Caco-2 (cell line): ENCODE measurements at regions of chr2 and their contacts with region 1.

Region 1: DNA sequence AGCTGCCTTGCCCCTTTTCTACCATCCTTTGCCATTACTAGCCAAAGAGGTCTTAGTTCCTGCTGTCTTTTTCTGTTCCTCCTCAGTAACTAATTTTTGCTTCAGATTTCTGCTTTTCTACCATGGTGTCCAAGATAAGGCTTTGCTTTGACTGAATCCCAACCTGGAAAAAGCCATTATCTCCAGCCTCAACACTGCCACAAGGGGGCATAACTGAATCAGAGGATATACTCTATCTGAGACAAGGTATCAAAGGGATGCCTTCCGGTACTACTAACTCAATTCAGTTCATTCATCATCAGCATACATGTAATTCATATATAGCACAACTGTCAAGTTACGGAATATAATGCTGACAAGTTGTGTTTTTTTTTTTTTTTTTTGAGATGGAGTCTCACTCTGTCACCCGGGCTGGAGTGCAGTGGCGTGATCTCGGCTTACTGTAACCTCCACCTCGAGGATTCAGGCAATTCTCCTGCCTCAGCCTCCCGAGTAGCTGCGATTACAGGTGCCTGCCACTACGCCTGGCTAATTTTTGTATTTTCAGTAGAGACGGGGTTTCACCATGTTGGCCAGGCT is 11.4 kb downstream of the OSGEPL1 start:
- DNase-seq: peak; percentile 53 to 61
- H3K4me3 ChIP-seq: no peak overlapping the region
- H3K4me3 Mint-ChIP-seq: no peak overlapping the region
- H3K27ac Mint-ChIP-seq: no peak overlapping the region
- H3K4me1 ChIP-seq: no peaks in the 10 kb centered on the region
- H3K4me1 Mint-ChIP-seq: no peaks in the 10 kb centered on the region
- H3K27me3 ChIP-seq: no peaks in the 10 kb centered on the region
- H3K27me3 Mint-ChIP-seq: no peaks in the 10 kb centered on the region
- CTCF ChIP-seq: peak; percentile 57 to 69

Region 2: GRCh38 chr2:189109921-189110397 is 641.2 kb before region 1 on chr2:
- CTCF ChIA-PET with region 1: no interaction called
- POLR2A ChIA-PET with region 1: no interaction called
- intact Hi-C with region 1: no loop called
- DNase-seq: peak in 1 of 2 experiments; percentile 32
- H3K4me3 ChIP-seq: no peak overlapping the region
- H3K4me3 Mint-ChIP-seq: no peak overlapping the region
- H3K27ac Mint-ChIP-seq: no peak overlapping the region
- H3K4me1 ChIP-seq: peaks cover 19% of the 10 kb centered on the region; the same call in 1 of the 2 replicates
- H3K4me1 Mint-ChIP-seq: peaks cover 18% of the 10 kb centered on the region
- H3K27me3 ChIP-seq: no peaks in the 10 kb centered on the region; the same call in 1 of the 2 replicates
- H3K27me3 Mint-ChIP-seq: no peaks in the 10 kb centered on the region
- CTCF ChIP-seq: peak in 1 of 2 experiments; percentile 27

Region 3: GRCh38 chr2:189798312-189799029 is 47.3 kb after region 1 on chr2:
- CTCF ChIA-PET with region 1: interaction called, 12 read pairs
- POLR2A ChIA-PET with region 1: no interaction called
- intact Hi-C with region 1: no loop called
- DNase-seq: no peak
- H3K4me3 ChIP-seq: no peak overlapping the region
- H3K4me3 Mint-ChIP-seq: no peak overlapping the region
- H3K27ac Mint-ChIP-seq: no peak overlapping the region
- H3K4me1 ChIP-seq: no peaks in the 10 kb centered on the region
- H3K4me1 Mint-ChIP-seq: no peaks in the 10 kb centered on the region
- H3K27me3 ChIP-seq: no peaks in the 10 kb centered on the region
- H3K27me3 Mint-ChIP-seq: no peaks in the 10 kb centered on the region
- CTCF ChIP-seq: peak; percentile 36 to 55